ENCODE measurements at regions of chr17 and their contacts with region 1.

Region 1: GRCh38 chr17:74305865-74306654 is 20.0 kb upstream of the KIF19 start:
- DNase-seq: no peak
- ATAC-seq: no peak
- H3K4me3 ChIP-seq: no peak overlapping the region
- H3K27ac ChIP-seq: no peak overlapping the region
- H3K4me1 ChIP-seq: peaks cover 0 to 11% (median 4%) of the 10 kb centered on the region in 12 donors
- H3K27me3 ChIP-seq: no peaks in the 10 kb centered on the region
- CTCF ChIP-seq: peak in 6 of 12 donors; percentile 5 to 25 (median 15)
- POLR2A ChIP-seq: no peak

Region 2: DNA sequence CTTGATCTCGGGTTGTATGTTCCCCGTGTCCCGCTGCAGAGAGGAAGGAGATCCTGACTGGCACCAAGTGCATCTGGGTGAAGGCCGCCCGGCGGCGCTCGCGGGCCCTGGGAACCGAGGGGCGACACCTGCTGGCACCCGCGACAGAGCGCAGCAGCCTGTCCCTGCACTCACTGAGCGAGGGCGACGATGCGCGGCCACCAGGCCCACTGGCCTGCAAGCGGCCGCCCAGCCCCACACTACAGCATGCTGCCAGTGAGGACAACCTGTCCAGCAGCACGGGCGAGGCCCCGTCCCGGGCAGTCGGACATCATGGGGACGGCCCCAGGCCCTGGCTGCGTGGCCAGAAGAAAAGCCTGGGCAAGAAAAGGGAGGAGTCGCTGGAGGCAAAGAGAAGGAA is 48.1 kb after region 1 on chr17:
- intact Hi-C with region 1: loop called in 5 of 10 experiments (anchors 5 kb)
- DNase-seq: peak in 4 of 5 donors; percentile 46 to 74 (median 53)
- ATAC-seq: peak in 3 of 4 donors; percentile 42 to 69 (median 64)
- H3K4me3 ChIP-seq: no peak overlapping the region
- H3K27ac ChIP-seq: no peak overlapping the region
- H3K4me1 ChIP-seq: peaks cover 0 to 21% (median 7%) of the 10 kb centered on the region in 12 donors
- H3K27me3 ChIP-seq: peaks cover 24 to 93% (median 74%) of the 10 kb centered on the region in 9 donors
- CTCF ChIP-seq: peak; percentile 30 to 68 (median 45)
- POLR2A ChIP-seq: no peak

Region 3: GRCh38 chr17:74361230-74362068 is 55.4 kb after region 1 on chr17 and contains the start of gene BTBD17:
- intact Hi-C with region 1: loop called in 9 of 10 experiments (anchors 1 to 5 kb)
- DNase-seq: peak; percentile 54 to 81 (median 61)
- ATAC-seq: peak; percentile 79 to 91 (median 82)
- H3K4me3 ChIP-seq: no peak within 1 kb of the TSS
- H3K27ac ChIP-seq: no peak within 1 kb of the TSS
- H3K4me1 ChIP-seq: peaks cover 0 to 24% (median 7%) of the 10 kb centered on the region in 12 donors
- H3K27me3 ChIP-seq: peaks cover 18 to 61% (median 52%) of the 10 kb centered on the region in 9 donors
- CTCF ChIP-seq: peak; percentile 63 to 84 (median 76)
- POLR2A ChIP-seq: no peak
- total RNA-seq, gene BTBD17: not detected

Region 4: DNA sequence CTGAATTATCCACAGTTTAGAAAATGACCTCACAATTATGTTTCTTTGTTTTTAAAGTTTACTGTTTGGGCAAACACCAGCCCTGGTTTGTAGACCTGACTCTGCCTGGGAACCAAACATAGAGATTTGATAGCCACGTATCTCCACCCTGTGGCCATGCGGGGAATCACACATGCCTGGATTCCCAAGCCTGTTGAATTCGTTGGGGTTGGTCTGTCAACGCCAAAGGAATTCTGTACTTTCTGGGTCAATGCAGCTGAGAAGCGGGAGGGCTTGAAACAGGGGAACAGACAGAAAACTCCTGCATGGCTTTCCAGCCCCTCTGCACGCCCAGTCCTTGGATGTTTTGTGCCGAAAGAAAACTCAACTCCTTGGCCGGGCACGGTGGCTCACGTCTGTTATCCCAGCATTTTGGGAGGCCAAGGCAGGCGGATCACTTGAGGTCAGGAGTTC is 187.3 kb after region 1 on chr17:
- intact Hi-C with region 1: loop called in 3 of 10 experiments (anchors 5 to 10 kb)
- DNase-seq: peak; percentile 58 to 81 (median 61)
- ATAC-seq: peak in 3 of 4 donors; percentile 80 to 86 (median 81)
- H3K4me3 ChIP-seq: no peak overlapping the region
- H3K27ac ChIP-seq: no peak overlapping the region
- H3K4me1 ChIP-seq: peaks cover 0 to 4% (median 0%) of the 10 kb centered on the region in 12 donors
- H3K27me3 ChIP-seq: peaks cover 0 to 8% (median 0%) of the 10 kb centered on the region in 9 donors
- CTCF ChIP-seq: peak; percentile 75 to 92 (median 84)
- POLR2A ChIP-seq: no peak